Activated B cell treated with CpG ODN at 0.5 μM for 24 hours (primary cell): ENCODE measurements at regions of chr5 and their contacts with region 1.

Region 1: DNA sequence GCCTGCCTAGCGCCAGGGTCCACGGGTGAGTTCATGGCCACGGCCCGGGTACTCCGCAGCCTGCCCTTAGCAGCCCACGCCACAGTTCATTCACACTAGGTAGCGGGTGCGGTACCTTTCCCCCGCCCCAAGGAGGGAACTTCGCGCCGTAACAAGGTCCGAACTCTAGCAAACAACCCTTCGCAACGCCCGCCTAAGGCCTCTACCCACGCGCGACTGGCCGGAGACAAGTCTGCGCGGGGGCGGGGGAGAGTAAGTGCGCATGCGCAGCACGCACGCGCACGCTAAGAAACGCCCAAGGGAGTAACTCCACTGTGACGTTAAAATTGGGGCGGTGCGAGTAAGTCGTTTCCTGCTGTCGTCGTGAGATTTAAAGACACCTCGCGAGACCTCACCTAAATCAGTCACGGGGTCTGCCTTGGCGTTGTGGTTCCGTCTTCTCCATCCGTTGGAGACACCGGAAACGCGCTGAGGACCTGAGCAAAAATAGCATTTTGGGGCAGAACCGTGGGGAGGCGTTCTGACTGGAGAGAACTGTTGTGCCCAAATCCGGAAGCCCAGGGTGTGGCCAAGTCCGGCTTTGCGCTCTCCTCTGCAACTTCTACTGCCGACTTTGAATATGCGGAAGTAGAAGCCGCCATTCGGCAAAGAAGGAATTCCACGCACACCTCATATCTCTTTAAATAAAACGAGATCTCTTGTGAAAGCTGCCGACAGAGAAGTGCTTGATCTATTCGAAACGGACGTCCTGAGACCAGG is at the start of gene RAPGEF6:
- DNase-seq: peak; percentile 89
- ATAC-seq: peak; percentile 87
- H3K4me3 Mint-ChIP-seq: peak within 1 kb of the TSS; percentile 90
- H3K27ac Mint-ChIP-seq: peak within 1 kb of the TSS; percentile 99
- H3K4me1 Mint-ChIP-seq: peaks cover 43% of the 10 kb centered on the region
- H3K27me3 Mint-ChIP-seq: no peaks in the 10 kb centered on the region
- CTCF ChIP-seq: no peak
- total RNA-seq, gene RAPGEF6: 37.2 and 45.1 TPM in 2 replicates

Region 2: GRCh38 chr5:131252824-131253171 is 382.4 kb before region 1 on chr5:
- CTCF ChIA-PET with region 1: no interaction called
- POLR2A ChIA-PET with region 1: no interaction called
- intact Hi-C with region 1: loop called (anchors 10 kb)
- DNase-seq: peak; percentile 52
- ATAC-seq: peak; percentile 86
- H3K4me3 Mint-ChIP-seq: peak overlapping the region; percentile 84
- H3K27ac Mint-ChIP-seq: peak overlapping the region; percentile 94
- H3K4me1 Mint-ChIP-seq: peaks cover 81% of the 10 kb centered on the region
- H3K27me3 Mint-ChIP-seq: no peaks in the 10 kb centered on the region
- CTCF ChIP-seq: no peak

Region 3: DNA sequence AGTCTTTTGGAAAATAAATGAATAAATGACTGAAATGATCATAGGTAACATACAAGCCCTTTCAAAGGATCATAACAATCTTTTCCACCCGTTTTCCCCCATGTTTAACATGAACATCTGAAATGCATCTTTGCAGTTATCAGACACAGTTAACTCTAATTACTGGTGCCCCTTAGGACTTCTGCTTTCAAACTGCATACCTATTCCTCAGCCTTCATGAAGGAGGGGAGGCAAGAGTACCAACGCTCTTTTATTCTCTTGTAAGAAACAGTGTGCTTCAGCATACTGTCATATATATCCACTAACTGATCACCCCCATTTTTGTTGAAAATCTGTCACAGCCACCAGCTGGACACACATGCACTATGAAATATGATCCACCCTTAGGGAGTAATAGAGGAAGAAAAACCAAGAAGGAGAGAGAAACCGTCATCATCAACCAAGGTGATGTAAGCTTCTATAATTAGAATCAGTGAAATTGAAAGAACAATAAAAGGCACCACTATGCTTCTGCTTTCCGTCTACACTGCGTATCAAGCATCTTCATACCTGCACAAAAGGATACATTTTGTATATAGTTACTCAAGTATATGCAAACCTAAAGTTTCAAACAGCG is 98.9 kb before region 1 on chr5:
- CTCF ChIA-PET with region 1: no interaction called
- POLR2A ChIA-PET with region 1: interaction called, 4 read pairs
- intact Hi-C with region 1: loop called (anchors 2 kb)
- DNase-seq: no peak
- ATAC-seq: peak; percentile 84
- H3K4me3 Mint-ChIP-seq: peak overlapping the region; percentile 47
- H3K27ac Mint-ChIP-seq: peak overlapping the region; percentile 81
- H3K4me1 Mint-ChIP-seq: peaks cover 46% of the 10 kb centered on the region
- H3K27me3 Mint-ChIP-seq: no peaks in the 10 kb centered on the region
- CTCF ChIP-seq: no peak

Region 4: GRCh38 chr5:131615957-131616356 is 19.2 kb before region 1 on chr5:
- CTCF ChIA-PET with region 1: no interaction called
- POLR2A ChIA-PET with region 1: interaction called, 3 read pairs
- intact Hi-C with region 1: loop called (anchors 2 kb)
- DNase-seq: no peak
- ATAC-seq: no peak
- H3K4me3 Mint-ChIP-seq: no peak overlapping the region
- H3K27ac Mint-ChIP-seq: no peak overlapping the region
- H3K4me1 Mint-ChIP-seq: peaks cover 65% of the 10 kb centered on the region
- H3K27me3 Mint-ChIP-seq: no peaks in the 10 kb centered on the region
- CTCF ChIP-seq: no peak

Region 5: GRCh38 chr5:131671994-131672655 is 37.0 kb after region 1 on chr5:
- CTCF ChIA-PET with region 1: no interaction called
- POLR2A ChIA-PET with region 1: interaction called, 5 read pairs
- intact Hi-C with region 1: loop called (anchors 2 kb)
- DNase-seq: no peak
- ATAC-seq: no peak
- H3K4me3 Mint-ChIP-seq: no peak overlapping the region
- H3K27ac Mint-ChIP-seq: no peak overlapping the region
- H3K4me1 Mint-ChIP-seq: peaks cover 30% of the 10 kb centered on the region
- H3K27me3 Mint-ChIP-seq: no peaks in the 10 kb centered on the region
- CTCF ChIP-seq: no peak

Region 6: GRCh38 chr5:131773805-131774204 is 138.6 kb after region 1 on chr5:
- CTCF ChIA-PET with region 1: no interaction called
- POLR2A ChIA-PET with region 1: no interaction called
- intact Hi-C with region 1: no loop called
- DNase-seq: no peak
- ATAC-seq: no peak
- H3K4me3 Mint-ChIP-seq: no peak overlapping the region
- H3K27ac Mint-ChIP-seq: no peak overlapping the region
- H3K4me1 Mint-ChIP-seq: peaks cover 32% of the 10 kb centered on the region
- H3K27me3 Mint-ChIP-seq: no peaks in the 10 kb centered on the region
- CTCF ChIP-seq: no peak

Region 7: GRCh38 chr5:131796793-131797693 is 161.9 kb after region 1 on chr5 and contains the start of gene FNIP1:
- CTCF ChIA-PET with region 1: no interaction called
- POLR2A ChIA-PET with region 1: interaction called, 10 read pairs
- intact Hi-C with region 1: loop called (anchors 1 kb)
- DNase-seq: peak; percentile 99
- ATAC-seq: peak; percentile 94
- H3K4me3 Mint-ChIP-seq: peak within 1 kb of the TSS; percentile 97
- H3K27ac Mint-ChIP-seq: peak within 1 kb of the TSS; percentile 91
- H3K4me1 Mint-ChIP-seq: peaks cover 33% of the 10 kb centered on the region
- H3K27me3 Mint-ChIP-seq: no peaks in the 10 kb centered on the region
- CTCF ChIP-seq: no peak
- total RNA-seq, gene FNIP1: 29.8 and 34.0 TPM in 2 replicates

Region 8: GRCh38 chr5:132410451-132411381 is 775.5 kb after region 1 on chr5:
- CTCF ChIA-PET with region 1: no interaction called
- POLR2A ChIA-PET with region 1: no interaction called
- intact Hi-C with region 1: loop called (anchors 2 kb)
- DNase-seq: peak; percentile 85
- ATAC-seq: peak; percentile 86
- H3K4me3 Mint-ChIP-seq: peak overlapping the region; percentile 94
- H3K27ac Mint-ChIP-seq: peak overlapping the region; percentile 99
- H3K4me1 Mint-ChIP-seq: peaks cover 75% of the 10 kb centered on the region
- H3K27me3 Mint-ChIP-seq: no peaks in the 10 kb centered on the region
- CTCF ChIP-seq: no peak